ENCODE measurements at regions of chr6 and their contacts with region 1.

Region 1: GRCh38 chr6:111503207-111503606 is 20.2 kb upstream of the REV3L start:
- DNase-seq: no peak

Region 2: DNA sequence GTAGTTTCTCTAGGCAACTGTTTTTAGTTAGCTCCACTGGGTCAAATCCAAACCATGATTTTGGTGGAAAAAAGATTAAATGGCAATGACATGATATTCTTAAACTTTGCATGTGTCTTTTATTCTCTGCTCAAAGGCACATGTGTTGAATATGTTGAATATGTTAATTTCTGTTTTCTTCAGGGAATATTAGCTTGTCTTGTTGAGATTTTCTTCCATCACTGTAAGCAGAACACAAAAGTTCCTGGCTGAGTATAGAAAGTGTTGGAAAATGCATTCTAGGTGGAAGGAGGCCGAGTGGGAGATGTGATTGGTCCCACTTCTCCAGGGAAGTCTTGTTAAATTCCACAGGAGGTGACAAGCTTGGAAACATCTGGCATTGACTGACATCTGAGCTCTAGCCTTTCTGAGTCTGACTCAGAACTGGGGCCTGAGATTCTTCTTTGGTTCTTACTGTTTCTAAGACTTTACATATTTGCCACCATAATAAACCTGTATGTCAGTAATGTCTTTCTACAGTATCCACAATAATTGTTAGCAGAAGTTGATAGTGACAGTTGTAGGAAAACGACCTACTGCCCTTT is 670.1 kb after region 1 on chr6:
- intact Hi-C with region 1: loop called in 1 of 2 experiments (anchors 5 kb)
- DNase-seq: no peak

Region 3: DNA sequence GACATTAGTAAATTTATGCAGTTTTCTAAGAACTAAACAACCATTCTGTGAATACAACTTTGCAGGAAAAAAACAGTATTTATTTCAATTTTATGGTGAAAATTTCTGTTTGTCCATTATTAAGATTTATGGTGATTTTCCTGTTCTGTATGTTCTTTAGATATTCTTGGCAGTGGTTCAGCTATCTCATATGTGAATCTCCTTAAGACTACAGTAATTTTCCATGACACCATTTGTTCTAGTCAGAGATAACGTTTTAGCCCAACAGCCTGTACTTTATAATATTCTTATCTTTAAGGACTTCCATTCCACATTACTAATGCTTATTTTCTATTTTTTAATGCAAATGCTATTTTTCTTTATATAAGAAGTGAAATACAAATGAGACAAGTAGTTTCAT is 1347.9 kb after region 1 on chr6:
- intact Hi-C with region 1: no loop called
- DNase-seq: no peak

Measured in posterior vena cava (tissue), 2 donors.